ENCODE measurements at regions of chr1 and their contacts with region 1.

Region 1: GRCh38 chr1:235415008-235415904 is 48.0 kb downstream of the TBCE start:
- DNase-seq: peak; percentile 37 to 66 (median 39)
- H3K4me3 ChIP-seq: no peak overlapping the region
- H3K4me3 Mint-ChIP-seq: no peak overlapping the region
- H3K27ac ChIP-seq: no peak overlapping the region
- H3K27ac Mint-ChIP-seq: peak overlapping the region in 2 of 8 donors; percentile 1 to 76
- H3K4me1 ChIP-seq: no peaks in the 10 kb centered on the region
- H3K4me1 Mint-ChIP-seq: peaks cover 6 to 8% (median 6%) of the 10 kb centered on the region in 3 donors
- H3K27me3 ChIP-seq: no peaks in the 10 kb centered on the region
- H3K27me3 Mint-ChIP-seq: no peaks in the 10 kb centered on the region

Region 2: DNA sequence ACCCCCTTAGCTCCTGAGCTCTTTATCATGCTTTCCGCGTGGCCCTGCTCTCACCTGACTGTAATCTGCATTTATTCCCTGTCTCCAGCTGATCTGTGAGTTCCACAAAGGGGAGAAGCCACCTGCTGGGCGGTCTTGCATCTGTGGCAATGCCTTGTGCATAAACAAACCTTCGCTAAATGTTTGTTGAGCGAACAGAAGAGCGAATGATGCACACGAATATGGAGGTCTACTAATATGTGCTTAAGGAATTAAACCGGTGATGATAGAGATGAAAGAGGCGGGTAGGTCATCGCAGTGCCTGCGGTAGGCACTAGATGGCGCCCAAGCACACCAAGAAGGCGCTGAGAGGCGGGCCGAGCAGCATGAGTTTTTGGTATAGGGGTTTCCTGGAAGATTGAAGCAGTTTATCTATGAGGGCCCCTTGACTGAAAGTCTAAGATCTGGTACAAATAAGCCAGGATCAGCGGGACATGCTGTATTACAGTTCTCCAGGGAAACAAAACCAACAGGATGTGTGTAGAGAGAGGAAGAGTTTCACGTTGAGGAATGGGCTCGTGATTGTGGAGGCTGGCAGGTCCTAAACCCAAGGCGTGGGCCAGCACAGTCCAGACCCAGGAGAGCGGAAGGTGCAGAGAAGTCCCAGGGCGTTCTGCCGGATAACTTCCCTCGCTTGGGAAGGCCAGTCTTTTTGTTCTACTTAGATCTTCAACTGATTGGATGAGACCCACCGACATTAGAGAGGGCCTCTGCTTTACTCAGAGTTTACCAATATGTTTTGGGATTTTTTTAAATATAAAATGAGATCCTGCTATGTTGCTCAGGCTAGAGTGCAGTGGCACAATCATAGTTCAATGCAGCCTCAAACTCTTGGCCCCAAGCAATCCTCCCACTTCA is 321.3 kb before region 1 on chr1:
- CTCF ChIA-PET with region 1: interaction called, 44 read pairs
- POLR2A ChIA-PET with region 1: no interaction called
- DNase-seq: peak; percentile 67 to 84 (median 75)
- H3K4me3 ChIP-seq: no peak overlapping the region
- H3K4me3 Mint-ChIP-seq: no peak overlapping the region
- H3K27ac ChIP-seq: no peak overlapping the region
- H3K27ac Mint-ChIP-seq: peak overlapping the region in 2 of 8 donors; percentile 0 to 9
- H3K4me1 ChIP-seq: no peaks in the 10 kb centered on the region
- H3K4me1 Mint-ChIP-seq: peaks cover 5 to 10% (median 7%) of the 10 kb centered on the region in 3 donors
- H3K27me3 ChIP-seq: no peaks in the 10 kb centered on the region
- H3K27me3 Mint-ChIP-seq: peaks cover 2 to 9% of the 10 kb centered on the region in 2 donors

Region 3: DNA sequence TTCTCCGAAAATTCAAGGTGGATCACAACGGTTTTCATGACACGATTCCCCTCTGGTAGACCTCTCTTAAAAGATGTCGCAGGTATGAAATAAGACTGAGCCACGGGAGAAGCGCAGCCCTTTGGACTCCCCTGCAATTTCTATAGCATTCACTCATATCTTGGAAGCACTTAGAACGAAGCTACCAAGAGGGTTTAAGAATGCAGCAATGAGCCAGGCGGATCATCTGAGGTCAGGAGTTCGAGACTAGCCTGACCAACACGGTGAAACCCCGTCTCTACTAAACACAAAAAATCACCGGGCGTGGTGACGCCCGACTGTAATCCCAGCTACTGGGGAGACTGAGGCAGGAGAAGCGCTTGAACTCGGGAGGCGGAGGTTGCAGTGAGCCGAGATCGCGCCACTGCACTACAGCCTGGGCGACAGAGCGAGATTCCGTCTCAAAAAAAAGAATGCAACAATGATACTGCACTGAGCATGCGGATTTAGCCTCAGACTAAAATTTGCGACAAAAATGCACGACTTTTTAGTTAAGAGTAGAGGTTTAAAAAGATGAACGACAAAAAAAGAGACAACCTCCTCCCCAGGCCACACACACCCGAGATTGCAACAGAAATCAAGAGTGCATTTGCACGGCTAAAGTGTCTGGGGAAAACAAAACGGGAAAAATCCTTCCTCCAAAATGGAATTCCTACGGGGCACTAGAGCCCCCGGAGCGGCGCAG is 287.4 kb before region 1 on chr1:
- CTCF ChIA-PET with region 1: interaction called, 5 read pairs
- POLR2A ChIA-PET with region 1: interaction called, 12 read pairs
- DNase-seq: peak in 1 of 5 donors; percentile 5
- H3K4me3 ChIP-seq: peak overlapping the region; percentile 98
- H3K4me3 Mint-ChIP-seq: peak overlapping the region; percentile 93 to 99 (median 97)
- H3K27ac ChIP-seq: peak overlapping the region; percentile 89
- H3K27ac Mint-ChIP-seq: peak overlapping the region; percentile 94 to 99 (median 98)
- H3K4me1 ChIP-seq: peaks cover 48% of the 10 kb centered on the region
- H3K4me1 Mint-ChIP-seq: peaks cover 45 to 56% (median 53%) of the 10 kb centered on the region in 3 donors
- H3K27me3 ChIP-seq: no peaks in the 10 kb centered on the region
- H3K27me3 Mint-ChIP-seq: no peaks in the 10 kb centered on the region

Region 4: GRCh38 chr1:235221653-235222375 is 193.4 kb before region 1 on chr1:
- CTCF ChIA-PET with region 1: interaction called, 4 read pairs
- POLR2A ChIA-PET with region 1: interaction called, 18 read pairs
- DNase-seq: no peak
- H3K4me3 ChIP-seq: no peak overlapping the region
- H3K4me3 Mint-ChIP-seq: no peak overlapping the region
- H3K27ac ChIP-seq: no peak overlapping the region
- H3K27ac Mint-ChIP-seq: no peak overlapping the region
- H3K4me1 ChIP-seq: no peaks in the 10 kb centered on the region
- H3K4me1 Mint-ChIP-seq: peaks cover 9 to 19% (median 17%) of the 10 kb centered on the region in 3 donors
- H3K27me3 ChIP-seq: no peaks in the 10 kb centered on the region
- H3K27me3 Mint-ChIP-seq: no peaks in the 10 kb centered on the region

Region 5: DNA sequence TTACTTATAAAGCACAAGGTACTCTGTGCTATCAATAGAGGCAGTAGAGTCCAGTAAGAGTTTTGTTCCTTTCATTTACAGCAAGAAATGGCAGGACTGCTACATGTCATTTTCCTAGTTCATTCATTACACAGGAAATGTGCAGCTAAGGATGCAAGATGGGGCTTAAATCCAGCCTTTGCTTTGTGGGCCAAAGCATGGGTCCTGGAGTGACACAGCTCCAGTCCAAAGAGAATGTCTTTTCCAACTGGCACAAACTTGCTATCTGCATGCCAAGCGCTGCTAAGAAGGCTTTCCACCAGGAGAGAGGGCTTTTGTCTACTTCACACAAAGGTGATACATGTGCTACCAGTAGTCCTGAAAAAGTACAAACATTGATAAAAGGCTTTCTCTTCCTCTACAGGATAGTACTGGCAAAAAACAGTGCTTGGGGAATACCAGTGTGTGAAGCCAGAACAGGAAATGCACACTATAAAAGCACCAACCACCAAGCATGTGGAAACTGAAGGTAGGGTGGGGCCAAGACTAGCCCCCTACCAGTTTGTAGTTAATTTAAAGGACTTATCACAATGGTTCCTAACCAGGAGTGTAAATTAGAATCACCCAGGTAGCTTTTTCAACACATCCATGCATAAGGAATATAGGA is 156.0 kb before region 1 on chr1:
- CTCF ChIA-PET with region 1: interaction called, 16 read pairs
- POLR2A ChIA-PET with region 1: no interaction called
- DNase-seq: peak in 1 of 5 donors; percentile 7
- H3K4me3 ChIP-seq: no peak overlapping the region
- H3K4me3 Mint-ChIP-seq: peak overlapping the region in 6 of 7 donors; percentile 19 to 62 (median 40)
- H3K27ac ChIP-seq: no peak overlapping the region
- H3K27ac Mint-ChIP-seq: peak overlapping the region; percentile 37 to 82 (median 67)
- H3K4me1 ChIP-seq: peaks cover 34% of the 10 kb centered on the region
- H3K4me1 Mint-ChIP-seq: peaks cover 69 to 92% (median 86%) of the 10 kb centered on the region in 3 donors
- H3K27me3 ChIP-seq: no peaks in the 10 kb centered on the region
- H3K27me3 Mint-ChIP-seq: no peaks in the 10 kb centered on the region

Region 6: GRCh38 chr1:235425357-235426025 is 10.2 kb after region 1 on chr1:
- CTCF ChIA-PET with region 1: interaction called, 15 read pairs
- POLR2A ChIA-PET with region 1: no interaction called
- DNase-seq: no peak
- H3K4me3 ChIP-seq: no peak overlapping the region
- H3K4me3 Mint-ChIP-seq: no peak overlapping the region
- H3K27ac ChIP-seq: no peak overlapping the region
- H3K27ac Mint-ChIP-seq: peak overlapping the region in 2 of 8 donors; percentile 43 to 74
- H3K4me1 ChIP-seq: peaks cover 10% of the 10 kb centered on the region
- H3K4me1 Mint-ChIP-seq: peaks cover 26 to 35% (median 31%) of the 10 kb centered on the region in 3 donors
- H3K27me3 ChIP-seq: no peaks in the 10 kb centered on the region
- H3K27me3 Mint-ChIP-seq: no peaks in the 10 kb centered on the region